Ascending aorta (tissue), 2 donors: ENCODE measurements at regions of chr6 and their contacts with region 1.

Region 1: GRCh38 chr6:34757687-34758274 is 476 bp downstream of the SNRPC start:
- DNase-seq: no peak
- H3K4me3 ChIP-seq: peak overlapping the region; percentile 84 to 87
- H3K27ac ChIP-seq: peak overlapping the region; percentile 88 to 92
- H3K4me1 ChIP-seq: peaks cover 3 to 7% of the 10 kb centered on the region in 2 donors
- H3K27me3 ChIP-seq: no peaks in the 10 kb centered on the region
- CTCF ChIP-seq: no peak

Region 2: GRCh38 chr6:34425498-34426410 is 332.0 kb before region 1 on chr6 and contains the start of gene RPS10:
- intact Hi-C with region 1: loop called (anchors 5 kb)
- DNase-seq: peak; percentile 41 to 94
- H3K4me3 ChIP-seq: peak within 1 kb of the TSS; percentile 70 to 88
- H3K27ac ChIP-seq: peak within 1 kb of the TSS; percentile 83 to 85
- H3K4me1 ChIP-seq: peaks cover 0 to 9% of the 10 kb centered on the region in 2 donors
- H3K27me3 ChIP-seq: no peaks in the 10 kb centered on the region
- CTCF ChIP-seq: no peak
- total RNA-seq, gene RPS10: 1,703 TPM

Region 3: GRCh38 chr6:34526992-34527728 is 230.6 kb before region 1 on chr6:
- intact Hi-C with region 1: loop called (anchors 2 kb)
- DNase-seq: peak; percentile 57 to 96
- H3K4me3 ChIP-seq: peak overlapping the region; percentile 37 to 40
- H3K27ac ChIP-seq: peak overlapping the region; percentile 41 to 52
- H3K4me1 ChIP-seq: peaks cover 0 to 8% of the 10 kb centered on the region in 2 donors
- H3K27me3 ChIP-seq: no peaks in the 10 kb centered on the region
- CTCF ChIP-seq: peak; percentile 66 to 85 (median 75)

Region 4: DNA sequence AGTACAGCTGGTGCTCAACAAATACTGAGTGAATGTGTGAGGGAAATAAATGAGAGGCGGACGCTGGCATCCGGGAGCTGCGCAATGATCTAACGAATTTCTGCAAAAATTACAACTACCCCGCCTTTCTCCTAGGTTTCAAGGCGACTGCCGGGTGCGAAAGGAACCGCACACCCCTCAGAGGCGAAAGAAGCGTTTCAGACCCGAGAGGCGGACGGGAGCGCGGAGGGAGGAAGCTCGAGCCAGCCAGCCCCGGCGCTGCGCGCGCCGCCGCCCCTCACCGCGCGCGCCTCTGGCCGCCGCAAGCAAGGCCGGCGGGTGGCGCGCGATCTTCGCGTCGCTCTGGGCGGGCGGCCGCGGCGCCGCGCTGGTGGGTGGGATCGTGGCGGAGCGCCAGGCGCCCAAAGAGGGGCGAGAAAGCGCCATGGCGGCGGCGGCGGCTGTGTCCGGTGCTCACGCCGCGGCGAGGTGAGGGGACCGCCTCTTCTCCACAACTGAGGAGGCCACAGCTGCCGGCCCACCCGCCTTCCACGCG is 34.0 kb after region 1 on chr6 and contains the start of gene BLTP3A:
- intact Hi-C with region 1: loop called (anchors 1 kb)
- DNase-seq: peak in 1 of 2 donors; percentile 79
- H3K4me3 ChIP-seq: peak within 1 kb of the TSS; percentile 88 to 99
- H3K27ac ChIP-seq: peak within 1 kb of the TSS; percentile 95 to 96
- H3K4me1 ChIP-seq: peaks cover 0 to 8% of the 10 kb centered on the region in 2 donors
- H3K27me3 ChIP-seq: no peaks in the 10 kb centered on the region
- CTCF ChIP-seq: peak in 1 of 3 experiments; percentile 25
- total RNA-seq, gene BLTP3A: 12.7 TPM